MCF 10A (cell line): ENCODE measurements at regions of chr1 and their contacts with region 1.

Region 1: DNA sequence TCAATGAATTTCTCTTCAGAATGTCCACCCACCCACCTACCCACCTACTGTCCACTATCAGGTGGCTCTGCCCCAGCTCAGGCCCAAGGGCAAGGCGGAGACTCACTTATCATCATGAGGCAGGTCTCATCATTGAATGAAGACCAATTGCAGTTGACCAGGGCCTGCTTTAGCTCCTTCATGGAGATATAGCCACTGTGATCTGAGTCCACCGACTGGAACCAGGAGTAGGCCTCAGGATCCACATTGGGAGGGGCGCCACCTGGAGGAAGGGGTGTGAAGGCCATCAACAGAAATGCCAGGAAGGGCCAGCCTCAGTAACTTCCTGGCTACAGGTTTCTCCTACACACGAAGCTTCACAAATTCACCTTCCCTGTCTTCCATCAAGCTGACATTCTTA is 11.6 kb downstream of the PEF1 start:
- DNase-seq: peak; percentile 52
- H3K4me3 Mint-ChIP-seq: no peak overlapping the region
- H3K27ac Mint-ChIP-seq: no peak overlapping the region
- H3K4me1 Mint-ChIP-seq: peaks cover 21% of the 10 kb centered on the region
- H3K27me3 Mint-ChIP-seq: no peaks in the 10 kb centered on the region
- CTCF ChIP-seq: peak; percentile 33

Region 2: GRCh38 chr1:30707412-30708360 is 925.4 kb before region 1 on chr1:
- CTCF ChIA-PET with region 1: no interaction called
- POLR2A ChIA-PET with region 1: no interaction called
- intact Hi-C with region 1: no loop called
- DNase-seq: peak; percentile 75
- H3K4me3 Mint-ChIP-seq: no peak overlapping the region
- H3K27ac Mint-ChIP-seq: no peak overlapping the region
- H3K4me1 Mint-ChIP-seq: peaks cover 5% of the 10 kb centered on the region
- H3K27me3 Mint-ChIP-seq: peaks cover 11% of the 10 kb centered on the region
- CTCF ChIP-seq: peak; percentile 97

Region 3: GRCh38 chr1:31394628-31395193 is 238.3 kb before region 1 on chr1:
- CTCF ChIA-PET with region 1: no interaction called
- POLR2A ChIA-PET with region 1: no interaction called
- intact Hi-C with region 1: no loop called
- DNase-seq: peak; percentile 90
- H3K4me3 Mint-ChIP-seq: peak overlapping the region; percentile 40
- H3K27ac Mint-ChIP-seq: no peak overlapping the region
- H3K4me1 Mint-ChIP-seq: peaks cover 19% of the 10 kb centered on the region
- H3K27me3 Mint-ChIP-seq: no peaks in the 10 kb centered on the region
- CTCF ChIP-seq: peak; percentile 83

Region 4: DNA sequence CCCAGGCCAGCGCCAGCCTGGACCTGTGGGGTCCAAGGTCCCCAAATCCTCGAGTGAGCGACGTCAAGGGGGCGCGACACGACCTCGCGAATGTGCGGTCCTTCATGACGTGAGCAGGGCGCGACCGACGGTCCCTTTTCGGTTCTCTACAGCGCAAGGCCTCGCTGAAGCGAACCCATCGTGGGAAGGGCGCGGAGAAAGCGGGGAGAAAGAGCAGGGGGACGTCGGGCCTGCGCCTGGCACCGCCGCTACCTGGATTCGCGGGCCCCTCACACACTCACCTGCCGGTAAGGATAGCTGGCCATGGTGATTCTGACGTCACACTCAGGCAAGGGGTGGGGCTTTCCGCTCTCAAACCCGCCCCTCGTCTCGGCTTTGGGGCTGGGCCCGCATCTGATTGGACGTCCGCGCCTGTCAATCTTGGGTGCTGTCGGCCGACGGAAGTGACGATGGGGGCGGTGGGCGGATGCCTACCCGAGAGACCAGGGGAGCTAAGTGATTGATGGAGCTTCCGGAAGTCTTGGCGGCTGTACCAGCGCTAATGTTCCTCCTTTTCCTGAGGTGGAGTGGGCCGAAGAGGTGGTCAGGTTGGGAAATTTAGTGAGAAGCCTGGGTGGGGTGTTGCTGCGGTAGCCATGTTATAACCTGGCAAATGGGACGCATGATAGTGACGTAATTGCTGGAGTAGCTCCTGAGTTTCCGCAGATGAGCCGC is 11.7 kb after region 1 on chr1 and contains the start of gene PEF1:
- CTCF ChIA-PET with region 1: interaction called, 3 read pairs
- POLR2A ChIA-PET with region 1: interaction called, 207 read pairs
- intact Hi-C with region 1: no loop called
- DNase-seq: peak; percentile 98
- H3K4me3 Mint-ChIP-seq: peak within 1 kb of the TSS; percentile 89
- H3K27ac Mint-ChIP-seq: peak within 1 kb of the TSS; percentile 100
- H3K4me1 Mint-ChIP-seq: no peaks in the 10 kb centered on the region
- H3K27me3 Mint-ChIP-seq: no peaks in the 10 kb centered on the region
- CTCF ChIP-seq: no peak
- total RNA-seq, gene PEF1: 56.7 and 61.1 TPM in 2 replicates

Region 5: DNA sequence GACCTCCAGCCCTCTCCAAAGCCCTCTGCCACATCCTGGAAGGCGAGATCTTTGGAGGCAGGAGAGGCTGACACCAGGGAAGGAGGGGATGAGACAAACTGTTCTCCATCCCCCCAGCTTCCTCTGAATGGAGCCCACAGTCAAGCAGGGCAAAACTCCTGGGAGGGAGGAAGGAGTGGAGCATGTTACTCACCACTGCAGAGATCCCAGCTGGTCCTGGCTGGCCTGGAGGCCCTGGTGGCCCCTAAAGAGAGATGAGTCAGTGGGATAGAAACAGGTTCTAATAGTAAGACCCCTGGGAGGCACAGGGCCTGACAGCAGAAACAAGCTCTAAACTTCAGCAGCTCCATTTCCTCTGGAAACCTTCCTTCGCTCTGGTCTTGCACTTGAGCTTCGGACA is 25.7 kb after region 1 on chr1:
- CTCF ChIA-PET with region 1: no interaction called
- POLR2A ChIA-PET with region 1: no interaction called
- intact Hi-C with region 1: no loop called
- DNase-seq: no peak
- H3K4me3 Mint-ChIP-seq: no peak overlapping the region
- H3K27ac Mint-ChIP-seq: no peak overlapping the region
- H3K4me1 Mint-ChIP-seq: no peaks in the 10 kb centered on the region
- H3K27me3 Mint-ChIP-seq: no peaks in the 10 kb centered on the region
- CTCF ChIP-seq: no peak